ENCODE measurements at regions of chr11 and their contacts with region 1.

Region 1: DNA sequence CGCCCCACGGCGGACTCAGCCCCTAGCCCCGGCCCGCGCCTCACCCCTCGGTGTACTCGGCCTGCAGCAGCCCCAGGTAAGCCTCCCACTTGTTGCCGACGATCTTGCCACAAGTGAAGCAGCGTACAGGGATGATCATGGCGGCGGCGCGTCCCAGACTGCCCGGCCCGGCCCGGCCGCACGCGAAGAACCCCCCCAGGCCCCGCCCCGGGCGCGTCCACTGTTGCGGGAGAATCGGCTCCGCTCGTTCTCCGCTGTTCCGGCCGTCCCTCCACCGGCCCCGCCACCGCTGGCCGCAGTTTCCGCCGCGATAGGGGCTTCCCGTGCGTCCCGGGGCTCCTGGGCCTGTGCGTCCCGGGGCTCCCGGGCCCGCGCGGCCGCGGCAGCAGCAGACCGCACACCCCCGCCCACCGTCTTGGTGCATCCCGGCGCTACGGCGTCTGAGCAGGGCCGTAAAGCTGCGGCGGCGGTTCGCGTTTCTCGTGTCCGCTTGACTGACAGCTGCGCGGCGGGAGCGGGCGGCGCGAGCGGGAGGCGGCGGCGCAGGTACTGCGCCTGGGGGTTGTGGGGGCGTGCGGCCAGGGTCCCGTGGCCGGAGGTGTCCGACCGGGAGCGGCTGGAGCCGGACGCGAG is at the starts of genes POLR2L and TSPAN4:
- DNase-seq: peak; percentile 74 to 92 (median 86)
- H3K4me3 ChIP-seq: peak within 1 kb of the TSS; percentile 71 to 100 (median 95)
- H3K27ac ChIP-seq: peak within 1 kb of the TSS; percentile 70 to 99 (median 97)
- H3K27me3 ChIP-seq: peaks cover 0 to 3% (median 0%) of the 10 kb centered on the region in 45 donors
- CTCF ChIP-seq: peak in 9 of 56 donors; percentile 3 to 49 (median 12)
- total RNA-seq, gene POLR2L: 37.4 to 86.4 (median 53.8) TPM
- total RNA-seq, gene TSPAN4: 5.9 to 25.0 (median 10.9) TPM

Region 2: GRCh38 chr11:706957-707816 is 135.3 kb before region 1 on chr11:
- intact Hi-C with region 1: no loop called
- DNase-seq: no peak
- H3K4me3 ChIP-seq: peak overlapping the region in 54 of 59 donors; percentile 25 to 65 (median 47)
- H3K27ac ChIP-seq: peak overlapping the region in 19 of 59 donors; percentile 1 to 84 (median 45)
- H3K27me3 ChIP-seq: peaks cover 0 to 13% (median 0%) of the 10 kb centered on the region in 45 donors
- CTCF ChIP-seq: peak in 1 of 56 donors; percentile 8

Region 3: DNA sequence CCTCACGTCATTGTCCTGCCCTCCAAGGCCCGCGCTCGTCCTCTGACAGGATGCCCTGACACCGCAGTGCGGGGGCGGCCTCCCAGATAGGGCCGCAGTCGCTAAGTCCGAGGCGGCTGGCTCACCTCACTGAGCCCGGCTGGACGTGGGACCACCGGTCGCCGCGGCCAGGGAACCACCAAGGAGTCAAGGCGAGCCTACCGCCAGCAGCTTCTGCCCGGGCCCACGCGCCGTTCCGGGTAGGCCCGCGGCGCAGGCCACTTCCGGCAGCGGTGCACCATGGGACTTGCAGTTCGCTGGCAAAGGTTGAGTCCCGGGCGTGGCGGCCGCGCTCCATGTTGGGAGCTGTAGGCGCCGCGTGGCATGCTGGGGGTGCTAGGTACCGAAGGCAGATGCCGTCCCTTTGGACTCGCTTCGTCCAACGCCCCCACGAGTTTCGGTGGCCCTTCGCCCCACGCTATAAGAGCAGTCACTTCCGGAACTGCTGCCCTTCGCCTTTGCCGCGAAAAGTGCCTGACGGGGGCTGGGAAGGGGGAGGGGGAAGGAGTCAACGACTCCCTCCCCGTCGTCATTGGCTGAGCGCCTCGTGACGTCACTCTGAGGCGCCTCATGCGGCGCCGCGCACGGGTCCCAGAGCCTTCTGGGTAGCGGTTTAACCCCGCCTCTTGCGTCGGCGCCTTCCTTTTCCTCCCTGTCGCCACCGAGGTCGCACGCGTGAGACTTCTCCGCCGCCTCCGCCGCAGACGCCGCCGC is 33.0 kb before region 1 on chr11 and contains the start of gene RPLP2:
- intact Hi-C with region 1: loop called in 1 of 2 experiments (anchors 2 kb)
- DNase-seq: peak; percentile 95 to 98 (median 97)
- H3K4me3 ChIP-seq: peak within 1 kb of the TSS; percentile 68 to 100 (median 98)
- H3K27ac ChIP-seq: peak within 1 kb of the TSS; percentile 81 to 100 (median 98)
- H3K27me3 ChIP-seq: no peaks in the 10 kb centered on the region
- CTCF ChIP-seq: peak in 14 of 56 donors; percentile 1 to 47 (median 18)
- total RNA-seq, gene RPLP2: 332 to 619 (median 470) TPM

Region 4: DNA sequence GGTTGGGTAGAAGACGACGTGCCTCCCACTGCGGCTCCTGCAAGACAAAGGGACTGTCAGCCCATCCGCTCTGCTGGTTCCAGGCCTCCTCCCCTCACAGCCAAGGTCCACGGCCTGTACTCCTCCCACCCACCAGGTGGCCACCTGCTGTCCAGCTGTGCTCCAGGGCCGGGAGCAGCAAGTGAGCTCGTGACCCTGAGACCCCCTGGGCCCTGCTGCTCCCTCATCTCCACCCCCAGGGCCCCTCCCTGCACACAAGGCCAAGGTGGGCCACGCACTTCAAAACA is 27.6 kb after region 1 on chr11:
- intact Hi-C with region 1: no loop called
- DNase-seq: no peak
- H3K4me3 ChIP-seq: no peak overlapping the region
- H3K27ac ChIP-seq: no peak overlapping the region
- H3K27me3 ChIP-seq: no peaks in the 10 kb centered on the region
- CTCF ChIP-seq: no peak

Region 5: GRCh38 chr11:914747-915501 is 72.4 kb after region 1 on chr11:
- intact Hi-C with region 1: no loop called
- DNase-seq: peak in 3 of 10 donors; percentile 39 to 59 (median 44)
- H3K4me3 ChIP-seq: peak overlapping the region in 1 of 59 donors; percentile 7
- H3K27ac ChIP-seq: peak overlapping the region in 18 of 59 donors; percentile 1 to 64 (median 26)
- H3K27me3 ChIP-seq: no peaks in the 10 kb centered on the region
- CTCF ChIP-seq: no peak

Region 6: GRCh38 chr11:925496-926321 is 83.2 kb after region 1 on chr11 and contains the start of gene AP2A2:
- intact Hi-C with region 1: loop called in 1 of 2 experiments (anchors 5 kb)
- DNase-seq: peak; percentile 57 to 90 (median 80)
- H3K4me3 ChIP-seq: peak within 1 kb of the TSS; percentile 54 to 86 (median 75)
- H3K27ac ChIP-seq: peak within 1 kb of the TSS in 58 of 59 donors; percentile 24 to 94 (median 81)
- H3K27me3 ChIP-seq: no peaks in the 10 kb centered on the region
- CTCF ChIP-seq: peak in 55 of 56 donors; percentile 39 to 89 (median 76)
- total RNA-seq, gene AP2A2: 90.2 to 214 (median 158) TPM

Measured in dorsolateral prefrontal cortex (tissue), 120 donors.